ENCODE measurements at regions of chr6 and their contacts with region 1.

Region 1: DNA sequence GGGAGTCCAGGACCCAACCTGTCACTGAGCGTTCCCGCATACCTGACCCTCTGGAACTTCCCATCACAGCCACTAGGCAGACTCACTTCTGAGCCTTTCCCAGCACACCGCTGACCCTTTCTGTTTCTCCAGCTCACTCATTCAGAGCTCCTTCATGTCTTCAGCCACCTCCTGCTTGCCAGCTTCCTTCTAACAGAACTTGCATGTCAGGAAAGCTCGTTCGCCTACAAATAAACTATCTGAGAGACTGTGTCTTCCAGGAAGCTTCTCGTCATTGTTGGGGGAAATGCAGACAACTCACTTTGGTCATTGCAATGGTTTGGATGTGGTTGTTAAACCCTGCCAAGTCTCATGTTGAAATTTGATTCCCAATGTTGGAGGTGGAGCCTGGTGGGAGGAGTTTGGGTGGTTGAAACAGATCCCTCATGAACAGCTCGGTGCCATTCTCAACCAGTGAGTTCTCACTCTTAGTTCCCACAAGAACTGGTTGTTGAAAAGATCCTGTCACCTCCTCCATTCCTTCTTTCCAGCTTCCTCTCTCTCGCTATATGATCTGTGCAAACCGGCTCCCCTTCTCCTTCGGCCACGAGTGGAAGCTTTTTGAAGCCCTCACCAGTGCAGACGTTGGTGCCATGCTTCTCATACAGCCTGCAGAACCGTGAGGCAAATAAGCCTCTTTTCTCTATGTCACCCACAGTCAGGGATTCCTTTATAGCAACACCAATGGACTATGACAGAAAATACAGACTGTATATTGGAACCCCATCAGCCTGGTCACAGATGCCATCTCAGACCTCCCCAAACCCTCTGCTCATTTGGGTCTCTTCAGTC is 1.4 kb upstream of the MUC21 start:
- H3K4me3 ChIP-seq: no peak overlapping the region; the same call in 1 of the 2 replicates
- H3K27ac ChIP-seq: no peak overlapping the region
- H3K4me1 ChIP-seq: no peaks in the 10 kb centered on the region
- CTCF ChIP-seq: no peak

Region 2: GRCh38 chr6:30742316-30743098 is 239.7 kb before region 1 on chr6 and contains the start of gene FLOT1:
- CTCF ChIA-PET with region 1: no interaction called
- POLR2A ChIA-PET with region 1: no interaction called
- H3K4me3 ChIP-seq: peak within 1 kb of the TSS; percentile 67
- H3K27ac ChIP-seq: peak within 1 kb of the TSS; percentile 94
- H3K4me1 ChIP-seq: no peaks in the 10 kb centered on the region
- CTCF ChIP-seq: no peak

Region 3: GRCh38 chr6:30800871-30801270 is 181.3 kb before region 1 on chr6:
- CTCF ChIA-PET with region 1: no interaction called
- POLR2A ChIA-PET with region 1: no interaction called
- H3K4me3 ChIP-seq: no peak overlapping the region
- H3K27ac ChIP-seq: no peak overlapping the region
- H3K4me1 ChIP-seq: peaks cover 4% of the 10 kb centered on the region; the same call in 1 of the 2 replicates
- CTCF ChIP-seq: no peak

Region 4: GRCh38 chr6:31042806-31043205 is 60.6 kb after region 1 on chr6:
- CTCF ChIA-PET with region 1: interaction called, 12 read pairs
- POLR2A ChIA-PET with region 1: interaction called, 5 read pairs
- H3K4me3 ChIP-seq: no peak overlapping the region
- H3K27ac ChIP-seq: no peak overlapping the region
- H3K4me1 ChIP-seq: no peaks in the 10 kb centered on the region
- CTCF ChIP-seq: no peak